Ascending aorta (tissue), 2 donors: ENCODE measurements at regions of chr15 and their contacts with region 1.

Region 1: GRCh38 chr15:86915811-86916331 is 836.2 kb downstream of the AGBL1 start:
- DNase-seq: no peak
- H3K4me3 ChIP-seq: no peak overlapping the region
- H3K27ac ChIP-seq: no peak overlapping the region
- H3K4me1 ChIP-seq: no peaks in the 10 kb centered on the region
- H3K27me3 ChIP-seq: no peaks in the 10 kb centered on the region
- CTCF ChIP-seq: peak in 1 of 3 experiments; percentile 32

Region 2: GRCh38 chr15:86942285-86942684 is 26.4 kb after region 1 on chr15:
- intact Hi-C with region 1: no loop called
- DNase-seq: no peak
- H3K4me3 ChIP-seq: no peak overlapping the region
- H3K27ac ChIP-seq: no peak overlapping the region
- H3K4me1 ChIP-seq: no peaks in the 10 kb centered on the region
- H3K27me3 ChIP-seq: no peaks in the 10 kb centered on the region
- CTCF ChIP-seq: no peak

Region 3: DNA sequence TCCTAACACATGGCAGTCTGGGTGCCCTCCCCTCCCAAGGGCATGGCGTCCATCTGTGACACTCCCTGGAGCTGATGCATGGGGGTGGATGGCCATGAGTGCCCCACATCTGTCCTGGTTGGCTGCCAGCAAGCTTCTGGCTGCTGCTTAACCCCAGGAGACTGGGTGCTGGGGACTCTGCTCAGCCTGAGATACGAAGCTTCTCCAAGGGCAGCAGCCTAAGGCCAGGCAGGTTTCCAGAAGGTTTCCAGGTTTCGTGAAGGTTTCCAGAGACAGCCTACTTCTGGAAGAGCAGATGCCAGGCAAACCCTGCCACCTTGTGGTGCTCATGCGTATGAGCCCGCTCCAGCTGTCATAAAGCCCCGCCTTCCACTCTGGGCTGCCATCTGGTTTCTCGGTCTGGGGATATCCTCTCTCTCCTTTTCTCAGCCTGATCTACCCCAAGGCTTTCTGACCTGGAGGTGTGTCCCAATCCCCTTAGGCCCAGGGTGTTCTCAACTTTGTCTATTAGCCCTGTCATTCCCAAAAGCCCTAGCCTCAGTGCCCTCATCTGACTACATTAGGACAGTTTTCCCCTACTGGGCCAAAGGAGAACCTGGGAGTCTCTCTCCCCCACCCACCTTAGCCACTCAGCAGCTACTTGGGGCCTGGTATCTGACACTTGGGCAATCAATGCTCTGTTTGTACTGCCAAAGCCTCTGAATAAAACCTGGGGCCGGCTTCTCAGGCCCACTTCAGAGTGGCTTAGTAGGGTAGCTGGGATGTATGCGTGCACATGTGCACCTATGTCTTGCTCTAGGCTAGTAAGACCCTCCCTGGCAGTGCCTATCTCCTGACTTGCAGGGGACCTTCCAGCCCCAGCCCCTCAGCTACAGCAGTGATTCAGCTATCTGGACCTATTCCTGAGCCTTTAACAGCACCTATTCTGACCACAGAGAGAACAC is 1539.3 kb after region 1 on chr15:
- intact Hi-C with region 1: loop called (anchors 5 kb)
- DNase-seq: no peak
- H3K4me3 ChIP-seq: no peak overlapping the region
- H3K27ac ChIP-seq: no peak overlapping the region
- H3K4me1 ChIP-seq: no peaks in the 10 kb centered on the region
- H3K27me3 ChIP-seq: no peaks in the 10 kb centered on the region
- CTCF ChIP-seq: peak; percentile 35 to 67 (median 53)